Caco-2 (cell line): ENCODE measurements at regions of chr20 and their contacts with region 1.

Region 1: GRCh38 chr20:41038878-41039404 is 10.3 kb downstream of the TOP1 start:
- DNase-seq: no peak
- H3K4me3 ChIP-seq: no peak overlapping the region
- H3K4me3 Mint-ChIP-seq: no peak overlapping the region
- H3K27ac Mint-ChIP-seq: no peak overlapping the region
- H3K4me1 ChIP-seq: peaks cover 51% of the 10 kb centered on the region
- H3K4me1 Mint-ChIP-seq: peaks cover 30% of the 10 kb centered on the region
- H3K27me3 ChIP-seq: no peaks in the 10 kb centered on the region
- H3K27me3 Mint-ChIP-seq: no peaks in the 10 kb centered on the region
- CTCF ChIP-seq: no peak

Region 2: GRCh38 chr20:40980106-40980827 is 58.7 kb before region 1 on chr20:
- CTCF ChIA-PET with region 1: interaction called, 17 read pairs
- POLR2A ChIA-PET with region 1: no interaction called
- intact Hi-C with region 1: no loop called
- DNase-seq: no peak
- H3K4me3 ChIP-seq: no peak overlapping the region
- H3K4me3 Mint-ChIP-seq: no peak overlapping the region
- H3K27ac Mint-ChIP-seq: no peak overlapping the region
- H3K4me1 ChIP-seq: no peaks in the 10 kb centered on the region
- H3K4me1 Mint-ChIP-seq: peaks cover 6% of the 10 kb centered on the region
- H3K27me3 ChIP-seq: no peaks in the 10 kb centered on the region
- H3K27me3 Mint-ChIP-seq: peaks cover 3% of the 10 kb centered on the region
- CTCF ChIP-seq: no peak

Region 3: GRCh38 chr20:41086402-41087338 is 47.7 kb after region 1 on chr20:
- CTCF ChIA-PET with region 1: no interaction called
- POLR2A ChIA-PET with region 1: no interaction called
- intact Hi-C with region 1: no loop called
- DNase-seq: no peak
- H3K4me3 ChIP-seq: no peak overlapping the region
- H3K4me3 Mint-ChIP-seq: no peak overlapping the region
- H3K27ac Mint-ChIP-seq: no peak overlapping the region
- H3K4me1 ChIP-seq: no peaks in the 10 kb centered on the region
- H3K4me1 Mint-ChIP-seq: peaks cover 7% of the 10 kb centered on the region
- H3K27me3 ChIP-seq: no peaks in the 10 kb centered on the region
- H3K27me3 Mint-ChIP-seq: no peaks in the 10 kb centered on the region
- CTCF ChIP-seq: no peak

Region 4: DNA sequence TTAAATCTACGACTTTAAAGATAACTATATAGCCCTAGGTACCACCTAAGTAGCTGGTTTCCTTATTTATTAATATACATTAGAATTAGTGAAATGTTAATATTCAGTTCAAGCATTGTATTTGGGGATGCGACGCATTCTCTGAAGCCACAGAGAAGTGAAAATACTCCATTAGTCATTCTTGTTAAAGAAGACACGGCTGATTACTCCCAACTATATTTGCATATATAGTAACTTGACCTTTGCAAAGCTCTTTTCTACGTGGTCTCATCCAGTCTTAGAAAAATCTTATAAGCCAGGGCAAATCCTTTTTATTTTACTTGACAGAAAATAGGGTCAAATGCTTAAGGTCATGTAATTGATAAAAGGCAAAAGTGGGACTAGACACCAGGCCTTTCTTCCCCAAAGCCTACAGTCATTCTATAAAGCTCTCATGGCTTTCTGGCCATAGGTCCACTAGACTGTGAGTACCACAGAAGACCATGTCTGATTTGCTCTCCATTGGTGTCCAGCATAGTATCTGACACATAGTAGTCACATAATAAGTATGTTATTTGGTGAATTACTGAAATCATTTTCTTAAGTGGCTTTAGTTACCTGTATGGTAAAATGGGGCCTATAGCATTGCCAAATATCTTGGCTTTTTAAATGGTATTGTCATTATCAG is 267.3 kb after region 1 on chr20:
- CTCF ChIA-PET with region 1: no interaction called
- POLR2A ChIA-PET with region 1: no interaction called
- intact Hi-C with region 1: no loop called
- DNase-seq: no peak
- H3K4me3 ChIP-seq: no peak overlapping the region
- H3K4me3 Mint-ChIP-seq: no peak overlapping the region
- H3K27ac Mint-ChIP-seq: no peak overlapping the region
- H3K4me1 ChIP-seq: peaks cover 7% of the 10 kb centered on the region; the same call in 1 of the 2 replicates
- H3K4me1 Mint-ChIP-seq: no peaks in the 10 kb centered on the region
- H3K27me3 ChIP-seq: no peaks in the 10 kb centered on the region
- H3K27me3 Mint-ChIP-seq: no peaks in the 10 kb centered on the region
- CTCF ChIP-seq: no peak